HepG2 (cell line): ENCODE measurements at regions of chr18 and their contacts with region 1.

Region 1: GRCh38 chr18:3771121-3771971 is 321.4 kb downstream of the TGIF1 start:
- DNase-seq: peak; percentile 48
- ATAC-seq: peak; percentile 100
- H3K4me3 ChIP-seq: no peak overlapping the region
- H3K27ac ChIP-seq: no peak overlapping the region
- H3K4me1 ChIP-seq: no peaks in the 10 kb centered on the region
- H3K27me3 ChIP-seq: peaks cover 0 to 18% of the 10 kb centered on the region in 2 experiments; a peak in 2 of 5 replicates
- CTCF ChIP-seq: peak; percentile 93
- EP300 ChIP-seq: no peak
- POLR2A ChIP-seq: no peak
- RAD21 ChIP-seq: peak; percentile 90

Region 2: DNA sequence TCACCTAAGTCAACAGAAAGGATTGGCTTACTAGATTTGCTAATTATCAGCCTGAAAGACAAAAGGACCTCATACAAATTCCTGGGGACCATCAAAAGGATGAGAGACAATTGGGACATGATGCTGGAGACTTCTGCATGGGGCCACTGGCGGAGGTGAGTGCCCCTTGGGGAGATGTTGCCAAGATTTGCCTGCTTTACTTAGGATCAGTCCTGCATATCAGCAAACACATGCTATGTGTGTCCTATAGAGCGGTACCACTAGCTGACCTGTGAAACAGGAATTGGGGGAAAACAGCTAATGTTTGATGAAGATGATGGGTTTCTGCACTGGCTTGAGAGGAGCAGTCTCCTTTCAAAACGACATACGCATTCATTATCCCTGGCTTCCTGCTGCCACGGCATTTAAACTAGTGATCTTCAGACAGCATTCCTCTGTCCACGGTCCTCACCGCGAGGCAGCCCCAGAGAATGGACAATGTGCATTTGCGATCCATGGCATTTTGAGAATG is 217.2 kb before region 1 on chr18:
- CTCF ChIA-PET with region 1: no interaction called
- POLR2A ChIA-PET with region 1: no interaction called
- in situ Hi-C with region 1: no loop called
- intact Hi-C with region 1: no loop called
- DNase-seq: peak; percentile 12
- ATAC-seq: peak; percentile 69
- H3K4me3 ChIP-seq: no peak overlapping the region
- H3K27ac ChIP-seq: no peak overlapping the region
- H3K4me1 ChIP-seq: peaks cover 14% of the 10 kb centered on the region
- H3K27me3 ChIP-seq: peaks cover 0 to 12% of the 10 kb centered on the region in 2 experiments; a peak in 2 of 5 replicates
- CTCF ChIP-seq: no peak
- EP300 ChIP-seq: no peak
- POLR2A ChIP-seq: no peak
- RAD21 ChIP-seq: no peak

Region 3: DNA sequence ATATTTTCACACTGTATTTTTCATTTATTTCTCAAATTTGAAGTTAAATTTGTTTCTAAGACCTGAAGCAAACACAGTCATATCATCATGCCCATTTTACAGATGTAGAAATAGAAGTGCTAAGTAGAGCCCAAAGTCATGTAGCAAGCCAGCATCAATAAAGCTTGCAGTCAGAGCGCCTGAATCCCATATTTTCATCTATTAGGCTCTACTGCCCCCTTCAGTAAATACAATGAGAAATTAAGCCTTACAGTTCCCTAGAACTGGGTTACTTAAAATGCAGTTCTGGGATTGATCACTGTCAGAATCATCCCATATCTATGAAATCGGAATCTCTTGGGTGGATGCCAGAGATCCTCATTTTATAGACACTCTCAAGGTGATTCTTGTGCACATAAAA is 98.5 kb after region 1 on chr18:
- CTCF ChIA-PET with region 1: interaction called, 11 read pairs
- POLR2A ChIA-PET with region 1: no interaction called
- in situ Hi-C with region 1: no loop called
- intact Hi-C with region 1: loop called (anchors 2 kb)
- DNase-seq: peak; percentile 36
- ATAC-seq: peak; percentile 70
- H3K4me3 ChIP-seq: no peak overlapping the region
- H3K27ac ChIP-seq: no peak overlapping the region
- H3K4me1 ChIP-seq: no peaks in the 10 kb centered on the region
- H3K27me3 ChIP-seq: 0 out of 5 replicates have a peak, but pooled peaks cover 0 to 7% of the 10 kb centered on the region in 2 experiments
- CTCF ChIP-seq: peak; percentile 55
- EP300 ChIP-seq: no peak
- POLR2A ChIP-seq: no peak
- RAD21 ChIP-seq: 0 out of 2 replicates have a peak, but pooled peaks have one; percentile 22

Region 4: DNA sequence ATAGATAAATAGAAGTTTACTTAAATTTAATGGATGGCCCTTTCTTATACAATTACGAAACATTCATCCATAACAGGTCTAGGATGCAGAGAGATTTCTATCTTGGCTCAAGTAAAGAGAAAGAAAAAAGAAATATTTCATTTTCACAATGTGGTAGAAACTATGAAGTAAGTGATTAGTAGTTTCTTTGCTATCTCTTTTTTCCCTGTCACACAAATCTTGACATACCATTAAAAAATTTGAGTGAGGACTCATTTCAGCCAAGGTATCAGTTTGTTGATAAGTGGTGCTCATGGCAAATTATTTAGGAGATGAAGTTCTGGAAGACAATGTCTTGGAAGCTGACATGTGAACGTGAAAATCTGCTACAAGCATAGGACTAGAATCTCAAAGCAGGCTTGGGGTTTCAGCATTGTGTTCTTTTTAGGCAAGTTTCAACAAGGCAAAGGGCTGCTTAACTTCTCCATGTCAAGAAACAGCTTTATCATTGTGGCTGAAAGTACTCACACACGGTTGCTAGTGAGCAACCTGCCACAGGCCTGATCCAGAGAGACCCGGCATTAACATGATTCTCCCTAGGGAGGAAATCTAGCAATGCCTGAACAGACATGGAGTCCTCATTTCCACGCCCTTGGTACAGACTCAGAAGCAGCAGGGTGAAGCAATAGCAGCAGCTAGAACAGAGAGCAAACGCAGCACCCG is 269.2 kb after region 1 on chr18:
- CTCF ChIA-PET with region 1: no interaction called
- POLR2A ChIA-PET with region 1: no interaction called
- in situ Hi-C with region 1: no loop called
- intact Hi-C with region 1: no loop called
- DNase-seq: no peak
- ATAC-seq: no peak
- H3K4me3 ChIP-seq: no peak overlapping the region
- H3K27ac ChIP-seq: no peak overlapping the region
- H3K4me1 ChIP-seq: no peaks in the 10 kb centered on the region
- H3K27me3 ChIP-seq: no peaks in the 10 kb centered on the region
- CTCF ChIP-seq: no peak
- EP300 ChIP-seq: no peak
- POLR2A ChIP-seq: no peak
- RAD21 ChIP-seq: no peak

Region 5: GRCh38 chr18:4068552-4069158 is 297.3 kb after region 1 on chr18:
- CTCF ChIA-PET with region 1: interaction called, 3 read pairs
- POLR2A ChIA-PET with region 1: no interaction called
- in situ Hi-C with region 1: no loop called
- intact Hi-C with region 1: loop called (anchors 1 kb)
- DNase-seq: peak; percentile 34
- ATAC-seq: peak; percentile 59; the same call in 2 of the 3 replicates
- H3K4me3 ChIP-seq: no peak overlapping the region
- H3K27ac ChIP-seq: no peak overlapping the region
- H3K4me1 ChIP-seq: no peaks in the 10 kb centered on the region
- H3K27me3 ChIP-seq: no peaks in the 10 kb centered on the region
- CTCF ChIP-seq: peak; percentile 61
- EP300 ChIP-seq: no peak
- POLR2A ChIP-seq: no peak
- RAD21 ChIP-seq: no peak